ENCODE measurements at regions of chr16 and their contacts with region 1.

Region 1: GRCh38 chr16:48596326-48596725 is 13.7 kb downstream of the N4BP1 start:
- DNase-seq: no peak
- H3K4me3 ChIP-seq: no peak overlapping the region
- H3K27ac ChIP-seq: no peak overlapping the region
- H3K4me1 ChIP-seq: no peaks in the 10 kb centered on the region
- H3K27me3 ChIP-seq: no peaks in the 10 kb centered on the region
- CTCF ChIP-seq: no peak

Region 2: GRCh38 chr16:47599512-47599911 is 996.8 kb before region 1 on chr16:
- CTCF ChIA-PET with region 1: no interaction called
- POLR2A ChIA-PET with region 1: interaction called, 34 read pairs
- intact Hi-C with region 1: no loop called
- DNase-seq: no peak
- H3K4me3 ChIP-seq: no peak overlapping the region
- H3K27ac ChIP-seq: no peak overlapping the region
- H3K4me1 ChIP-seq: no peaks in the 10 kb centered on the region
- H3K27me3 ChIP-seq: no peaks in the 10 kb centered on the region
- CTCF ChIP-seq: no peak

Region 3: GRCh38 chr16:48556913-48557351 is 39.4 kb before region 1 on chr16:
- CTCF ChIA-PET with region 1: no interaction called
- POLR2A ChIA-PET with region 1: no interaction called
- intact Hi-C with region 1: no loop called
- DNase-seq: no peak
- H3K4me3 ChIP-seq: no peak overlapping the region
- H3K27ac ChIP-seq: no peak overlapping the region
- H3K4me1 ChIP-seq: no peaks in the 10 kb centered on the region
- H3K27me3 ChIP-seq: no peaks in the 10 kb centered on the region
- CTCF ChIP-seq: no peak